ENCODE measurements at regions of chr10 and their contacts with region 1.

Region 1: GRCh38 chr10:104209575-104210198 is 22.5 kb downstream of the CFAP43 start:
- DNase-seq: peak; percentile 70
- H3K4me3 ChIP-seq: no peak overlapping the region
- H3K27ac ChIP-seq: no peak overlapping the region
- H3K4me1 ChIP-seq: no peaks in the 10 kb centered on the region
- H3K27me3 ChIP-seq: 0 out of 2 replicates have a peak, but pooled peaks cover 3% of the 10 kb centered on the region

Region 2: GRCh38 chr10:103712570-103713498 is 496.9 kb before region 1 on chr10:
- in situ Hi-C with region 1: loop called (anchors 25 kb)
- DNase-seq: peak; percentile 81
- H3K4me3 ChIP-seq: no peak overlapping the region
- H3K27ac ChIP-seq: no peak overlapping the region
- H3K4me1 ChIP-seq: peaks cover 19% of the 10 kb centered on the region
- H3K27me3 ChIP-seq: no peaks in the 10 kb centered on the region

Region 3: DNA sequence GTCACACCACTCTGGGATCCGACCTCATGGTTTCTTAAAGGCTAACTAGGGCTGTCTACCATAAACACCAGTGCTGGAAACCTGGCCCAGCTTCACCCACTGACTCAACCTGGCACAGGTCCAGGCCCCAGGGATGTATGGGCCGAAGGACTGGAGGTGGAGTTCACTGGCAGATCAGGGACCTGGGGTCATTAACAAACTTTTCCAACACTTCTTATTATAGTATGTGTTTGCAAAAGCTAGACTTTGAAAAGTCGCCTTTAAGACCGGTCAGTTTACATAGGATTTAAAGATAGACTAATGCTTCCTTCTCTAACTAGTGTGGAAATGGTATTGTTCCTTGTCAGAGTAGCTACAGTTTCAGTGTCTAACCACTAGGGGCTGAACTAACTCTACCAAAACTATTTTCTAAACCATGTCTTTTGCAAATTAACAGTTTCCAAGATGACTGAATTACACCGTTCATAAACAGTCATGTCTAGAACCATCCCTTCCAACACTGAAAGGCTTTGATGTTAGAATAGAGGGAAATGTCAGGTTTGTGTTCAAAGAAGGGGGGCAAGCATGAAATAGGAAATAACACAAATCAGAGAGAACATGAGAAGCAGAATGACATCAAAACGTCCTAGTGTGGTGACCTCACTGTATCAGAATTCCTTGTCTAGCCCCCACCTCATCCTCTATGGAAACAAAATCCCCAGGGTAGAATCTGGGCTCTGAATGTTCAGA is 321.4 kb before region 1 on chr10:
- in situ Hi-C with region 1: loop called (anchors 25 kb)
- DNase-seq: peak; percentile 90
- H3K4me3 ChIP-seq: no peak overlapping the region
- H3K27ac ChIP-seq: peak overlapping the region; percentile 57
- H3K4me1 ChIP-seq: peaks cover 15% of the 10 kb centered on the region
- H3K27me3 ChIP-seq: no peaks in the 10 kb centered on the region

Region 4: GRCh38 chr10:104045151-104046089 is 164.3 kb before region 1 on chr10:
- in situ Hi-C with region 1: loop called (anchors 10 kb)
- DNase-seq: peak; percentile 89
- H3K4me3 ChIP-seq: no peak overlapping the region
- H3K27ac ChIP-seq: no peak overlapping the region
- H3K4me1 ChIP-seq: peaks cover 15% of the 10 kb centered on the region
- H3K27me3 ChIP-seq: no peaks in the 10 kb centered on the region

Region 5: DNA sequence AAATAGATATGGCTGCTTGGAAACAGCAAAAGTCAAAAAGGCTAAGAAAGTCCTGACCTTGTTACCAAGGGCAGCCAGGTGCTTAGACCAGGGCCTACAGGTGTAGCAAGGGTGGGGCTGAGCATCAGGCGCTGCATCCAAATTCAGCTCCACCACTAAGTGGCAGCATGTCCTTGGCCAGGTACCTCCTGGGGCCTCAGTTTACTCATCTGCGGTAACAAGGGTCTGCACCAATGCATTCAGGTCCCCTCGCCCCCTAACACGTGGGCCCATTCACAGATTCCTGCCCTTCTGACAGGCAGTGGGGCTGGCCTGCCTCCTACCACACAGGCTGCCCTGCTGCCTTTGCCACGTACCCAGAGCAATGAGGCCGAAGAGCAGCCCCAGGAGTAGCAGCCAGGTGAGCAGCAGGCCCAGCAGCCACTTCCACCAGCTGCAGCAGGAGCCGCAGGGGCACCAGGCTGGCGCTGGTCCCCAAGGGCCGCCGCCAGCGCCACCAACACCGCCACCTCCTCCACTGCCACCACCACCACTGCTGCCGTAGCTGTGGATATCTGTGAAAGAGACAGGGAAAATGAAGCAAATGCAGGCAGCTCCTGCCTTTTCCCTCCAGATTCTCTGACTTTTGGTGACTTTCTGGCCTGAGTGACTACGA is 152.9 kb before region 1 on chr10:
- in situ Hi-C with region 1: no loop called
- DNase-seq: no peak
- H3K4me3 ChIP-seq: no peak overlapping the region
- H3K27ac ChIP-seq: no peak overlapping the region
- H3K4me1 ChIP-seq: peaks cover 21% of the 10 kb centered on the region
- H3K27me3 ChIP-seq: 0 out of 2 replicates have a peak, but pooled peaks cover 4% of the 10 kb centered on the region

Measured in GM23248 (cell line).